ENCODE measurements at regions of chr10 and their contacts with region 1.

Region 1: DNA sequence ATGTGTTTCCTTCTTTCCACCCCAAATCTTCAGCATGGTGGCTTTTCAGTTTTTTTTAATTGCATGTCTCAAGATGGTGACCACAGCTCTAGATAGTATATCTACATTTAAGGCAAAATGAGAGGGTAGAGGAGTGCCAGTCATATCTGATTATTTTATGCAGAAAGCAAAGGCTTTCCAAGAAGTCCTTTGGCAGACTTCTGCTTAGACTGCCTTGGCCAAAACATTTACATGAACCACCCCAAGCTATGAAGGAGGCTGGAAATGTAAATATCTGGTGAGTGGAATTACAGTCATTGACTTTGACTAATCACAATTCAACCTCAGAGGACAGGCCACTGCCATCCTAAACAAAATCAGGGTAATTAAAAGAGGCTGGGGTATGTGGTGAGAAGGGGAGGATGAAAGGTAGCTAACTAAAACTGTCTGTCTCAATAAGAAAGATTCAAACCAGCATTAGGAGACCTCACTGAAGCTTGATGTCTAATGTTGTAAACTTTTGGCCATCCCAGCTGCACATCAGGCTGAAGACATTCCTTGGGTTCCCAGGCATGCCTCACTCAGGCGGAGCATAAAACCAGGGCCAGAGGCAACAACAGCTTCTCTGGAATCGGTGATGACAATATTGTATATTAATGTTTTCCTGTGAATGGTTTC is 53.4 kb downstream of the PPP1R3C start:
- DNase-seq: no peak
- ATAC-seq: no peak
- H3K4me3 ChIP-seq: no peak overlapping the region
- H3K27ac ChIP-seq: peak overlapping the region in 3 of 10 donors; percentile 10 to 29 (median 21)
- H3K4me1 ChIP-seq: peaks cover 3 to 34% (median 22%) of the 10 kb centered on the region in 9 donors
- H3K27me3 ChIP-seq: no peaks in the 10 kb centered on the region
- CTCF ChIP-seq: no peak

Region 2: GRCh38 chr10:91034494-91035159 is 544.8 kb before region 1 on chr10:
- intact Hi-C with region 1: no loop called
- DNase-seq: peak; percentile 68 to 75
- ATAC-seq: peak; percentile 27 to 86 (median 73)
- H3K4me3 ChIP-seq: no peak overlapping the region
- H3K27ac ChIP-seq: peak overlapping the region in 5 of 10 donors; percentile 12 to 49 (median 39)
- H3K4me1 ChIP-seq: peaks cover 0 to 31% (median 16%) of the 10 kb centered on the region in 9 donors
- H3K27me3 ChIP-seq: no peaks in the 10 kb centered on the region
- CTCF ChIP-seq: no peak

Region 3: GRCh38 chr10:91601212-91601611 is 21.8 kb after region 1 on chr10:
- intact Hi-C with region 1: loop called in 1 of 10 experiments (anchors 1 kb)
- DNase-seq: no peak
- ATAC-seq: no peak
- H3K4me3 ChIP-seq: no peak overlapping the region
- H3K27ac ChIP-seq: no peak overlapping the region
- H3K4me1 ChIP-seq: peaks cover 3 to 58% (median 36%) of the 10 kb centered on the region in 9 donors
- H3K27me3 ChIP-seq: no peaks in the 10 kb centered on the region
- CTCF ChIP-seq: no peak